MCF 10A (cell line): ENCODE measurements at regions of chr19 and their contacts with region 1.

Region 1: DNA sequence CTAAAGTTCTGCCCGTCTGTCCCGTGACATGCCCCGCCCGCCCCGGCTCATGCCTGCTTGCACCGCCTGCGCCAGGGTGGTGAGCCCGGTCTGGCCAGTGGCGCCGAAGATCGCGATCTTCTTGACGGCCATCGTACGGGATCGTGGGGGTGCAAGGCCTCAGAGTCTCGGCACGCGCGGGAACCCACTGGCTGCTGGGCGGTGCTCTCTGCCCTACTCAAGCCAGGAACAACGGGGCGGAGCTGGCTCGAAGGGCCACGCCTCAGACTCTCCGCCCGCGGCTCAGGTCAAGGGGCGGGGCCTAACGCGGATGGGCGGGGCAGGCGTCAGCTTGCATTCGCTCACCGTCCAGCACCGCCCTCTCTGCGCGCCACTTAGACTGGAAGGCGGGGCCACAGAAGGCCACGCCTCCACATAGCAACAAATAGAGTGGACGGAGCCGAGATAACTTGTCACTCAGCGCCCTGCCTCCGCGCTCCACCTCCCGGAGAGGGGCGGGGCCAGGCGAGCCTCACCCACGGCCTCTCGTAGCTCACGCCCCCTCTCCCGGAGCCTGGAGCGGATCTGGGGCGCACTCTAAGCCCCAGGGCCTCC is at the start of gene BLVRB:
- DNase-seq: peak; percentile 100
- H3K4me3 Mint-ChIP-seq: peak within 1 kb of the TSS; percentile 98
- H3K27ac Mint-ChIP-seq: peak within 1 kb of the TSS; percentile 92
- H3K4me1 Mint-ChIP-seq: peaks cover 19% of the 10 kb centered on the region
- H3K27me3 Mint-ChIP-seq: no peaks in the 10 kb centered on the region
- CTCF ChIP-seq: no peak
- total RNA-seq, gene BLVRB: 44.0 and 68.7 TPM in 2 replicates

Region 2: DNA sequence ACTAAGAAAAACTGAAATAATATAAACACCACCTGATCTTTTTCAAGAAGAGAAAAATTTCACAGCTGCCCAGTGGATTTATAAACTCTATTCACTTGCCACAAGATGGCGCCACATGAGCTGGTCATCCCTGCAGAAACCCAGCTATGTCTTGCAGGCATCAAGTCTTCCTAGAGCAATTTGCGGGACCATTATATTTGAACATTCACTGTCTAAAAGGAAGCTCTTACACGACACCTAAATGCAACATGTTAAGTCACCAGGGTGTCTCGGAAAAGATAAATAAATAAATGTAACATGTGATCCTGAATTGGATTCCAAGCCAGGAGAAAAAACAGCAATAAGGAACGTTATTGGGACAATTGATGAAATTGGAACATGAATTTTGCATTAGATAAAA is 160.3 kb before region 1 on chr19:
- CTCF ChIA-PET with region 1: interaction called, 17 read pairs
- POLR2A ChIA-PET with region 1: interaction called, 7 read pairs
- intact Hi-C with region 1: no loop called
- DNase-seq: peak; percentile 92
- H3K4me3 Mint-ChIP-seq: no peak overlapping the region
- H3K27ac Mint-ChIP-seq: no peak overlapping the region
- H3K4me1 Mint-ChIP-seq: peaks cover 8% of the 10 kb centered on the region
- H3K27me3 Mint-ChIP-seq: no peaks in the 10 kb centered on the region
- CTCF ChIP-seq: peak; percentile 72

Region 3: GRCh38 chr19:40425450-40426287 is 40.0 kb before region 1 on chr19 and contains the start of gene SERTAD1:
- CTCF ChIA-PET with region 1: interaction called, 18 read pairs
- POLR2A ChIA-PET with region 1: interaction called, 49 read pairs
- intact Hi-C with region 1: loop called (anchors 1 kb)
- DNase-seq: peak; percentile 99
- H3K4me3 Mint-ChIP-seq: peak within 1 kb of the TSS; percentile 95
- H3K27ac Mint-ChIP-seq: peak within 1 kb of the TSS; percentile 97
- H3K4me1 Mint-ChIP-seq: no peaks in the 10 kb centered on the region
- H3K27me3 Mint-ChIP-seq: no peaks in the 10 kb centered on the region
- CTCF ChIP-seq: peak; percentile 86
- total RNA-seq, gene SERTAD1: 16.2 and 17.9 TPM in 2 replicates

Region 4: GRCh38 chr19:40452016-40452415 is 13.6 kb before region 1 on chr19:
- CTCF ChIA-PET with region 1: interaction called, 14 read pairs
- POLR2A ChIA-PET with region 1: interaction called, 37 read pairs
- intact Hi-C with region 1: no loop called
- DNase-seq: no peak
- H3K4me3 Mint-ChIP-seq: no peak overlapping the region
- H3K27ac Mint-ChIP-seq: no peak overlapping the region
- H3K4me1 Mint-ChIP-seq: no peaks in the 10 kb centered on the region
- H3K27me3 Mint-ChIP-seq: no peaks in the 10 kb centered on the region
- CTCF ChIP-seq: no peak

Region 5: DNA sequence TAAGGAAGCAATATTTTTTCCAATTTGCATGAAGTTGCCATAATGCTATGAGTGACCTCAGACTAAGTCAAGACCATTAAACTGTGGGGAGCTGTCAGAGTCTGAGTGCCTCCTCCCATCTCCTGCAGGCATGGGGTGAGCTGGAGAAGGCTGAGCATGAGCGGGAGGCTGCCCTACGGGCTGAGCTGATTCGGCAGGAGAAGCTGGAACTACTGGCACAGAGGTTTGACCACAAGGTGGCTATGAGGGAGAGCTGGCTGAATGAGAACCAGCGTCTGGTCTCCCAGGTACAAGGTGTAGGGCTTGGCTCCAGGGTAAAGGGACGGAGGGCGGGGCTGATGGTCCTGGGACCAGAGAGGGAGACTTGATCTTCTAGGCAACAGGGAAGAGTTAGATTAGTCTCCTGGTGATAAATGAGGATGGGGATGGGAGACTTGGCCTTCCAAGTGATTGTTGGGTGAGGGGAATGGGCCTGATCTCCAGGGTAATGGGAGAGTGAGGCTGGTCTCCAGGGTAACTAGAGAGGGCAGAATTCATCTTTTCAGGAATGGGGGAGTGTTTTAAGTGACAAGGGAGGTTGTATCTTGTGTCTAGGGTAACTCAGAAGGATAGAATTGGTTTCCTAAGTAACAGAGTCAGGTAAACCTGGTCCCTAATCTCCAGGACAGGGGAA is 37.1 kb after region 1 on chr19:
- CTCF ChIA-PET with region 1: no interaction called
- POLR2A ChIA-PET with region 1: no interaction called
- intact Hi-C with region 1: no loop called
- DNase-seq: peak; percentile 45
- H3K4me3 Mint-ChIP-seq: no peak overlapping the region
- H3K27ac Mint-ChIP-seq: no peak overlapping the region
- H3K4me1 Mint-ChIP-seq: peaks cover 5% of the 10 kb centered on the region
- H3K27me3 Mint-ChIP-seq: peaks cover 28% of the 10 kb centered on the region
- CTCF ChIP-seq: peak; percentile 20

Region 6: DNA sequence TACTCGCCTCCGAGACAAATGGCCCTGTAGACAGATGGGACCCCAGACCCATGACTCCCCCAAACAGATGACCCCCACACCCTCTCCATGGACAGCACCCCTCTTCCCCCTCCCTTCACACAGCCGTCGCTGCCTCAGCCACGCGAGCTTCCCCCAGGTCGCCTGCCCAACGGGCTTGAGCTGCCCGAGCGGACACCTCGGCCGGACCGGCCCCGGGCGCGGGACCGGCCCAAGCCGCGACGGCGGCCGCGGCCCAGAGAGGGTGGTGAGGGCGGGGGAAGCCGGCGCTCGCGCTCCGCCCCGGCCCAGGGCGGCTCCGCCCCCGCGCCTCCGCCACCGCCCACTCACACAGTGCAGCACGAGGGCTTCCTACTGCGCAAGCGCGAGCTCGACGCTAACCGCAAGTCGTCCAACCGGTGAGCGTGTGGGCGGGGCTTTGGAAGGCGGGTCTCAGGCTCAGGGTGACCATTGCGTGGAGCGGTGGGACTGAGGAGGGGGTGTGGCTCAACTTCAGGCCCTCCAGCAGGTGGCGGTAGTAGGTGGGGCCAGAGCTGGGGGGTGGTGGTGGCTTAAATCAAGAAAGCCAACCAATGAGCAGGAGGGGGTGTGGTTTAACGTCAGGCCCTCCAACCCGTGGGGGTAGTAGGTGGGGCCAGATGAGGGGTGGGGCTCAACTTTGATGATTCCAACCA is 104.8 kb after region 1 on chr19:
- CTCF ChIA-PET with region 1: interaction called, 4 read pairs
- POLR2A ChIA-PET with region 1: interaction called, 23 read pairs
- intact Hi-C with region 1: no loop called
- DNase-seq: peak; percentile 100
- H3K4me3 Mint-ChIP-seq: peak overlapping the region; percentile 66
- H3K27ac Mint-ChIP-seq: peak overlapping the region; percentile 39
- H3K4me1 Mint-ChIP-seq: peaks cover 13% of the 10 kb centered on the region
- H3K27me3 Mint-ChIP-seq: no peaks in the 10 kb centered on the region
- CTCF ChIP-seq: peak; percentile 33

Region 7: GRCh38 chr19:40603389-40604135 is 137.9 kb after region 1 on chr19:
- CTCF ChIA-PET with region 1: interaction called, 40 read pairs
- POLR2A ChIA-PET with region 1: interaction called, 94 read pairs
- intact Hi-C with region 1: loop called (anchors 1 kb)
- DNase-seq: peak; percentile 99
- H3K4me3 Mint-ChIP-seq: peak overlapping the region; percentile 79
- H3K27ac Mint-ChIP-seq: peak overlapping the region; percentile 69
- H3K4me1 Mint-ChIP-seq: peaks cover 47% of the 10 kb centered on the region
- H3K27me3 Mint-ChIP-seq: no peaks in the 10 kb centered on the region
- CTCF ChIP-seq: no peak

Region 8: DNA sequence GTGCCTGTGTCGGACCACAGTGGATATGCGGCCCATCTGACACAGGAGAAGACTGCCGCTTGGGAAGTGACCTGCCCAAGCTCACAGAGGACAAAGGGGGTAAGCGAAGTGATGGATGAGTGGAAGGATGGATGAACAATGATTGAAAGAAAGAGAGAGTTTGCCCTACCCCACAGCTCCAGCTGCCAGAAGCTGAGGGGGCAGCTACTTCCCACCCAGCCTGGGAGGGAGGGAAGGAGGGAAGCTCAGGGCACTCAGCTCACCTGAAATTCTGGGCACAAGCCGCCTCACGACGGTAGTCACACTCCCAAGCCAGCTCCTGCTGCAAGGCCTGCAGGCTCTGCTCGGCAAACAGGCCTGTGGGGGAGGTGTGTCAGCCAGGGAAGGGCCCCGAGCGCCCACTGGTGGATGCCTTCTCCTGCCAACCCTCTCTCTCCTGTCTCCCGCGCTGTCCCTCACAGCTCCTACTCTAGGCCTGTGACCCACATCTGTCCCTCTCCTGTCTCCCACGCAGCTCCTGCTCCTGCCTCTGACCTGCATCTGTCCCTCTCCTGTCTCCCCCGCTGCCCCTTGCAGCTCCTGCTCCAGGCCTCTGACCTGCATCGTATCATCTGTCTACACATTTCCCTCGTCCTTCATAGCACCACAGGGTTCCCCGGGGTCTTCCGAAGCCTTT is 236.8 kb after region 1 on chr19:
- CTCF ChIA-PET with region 1: no interaction called
- POLR2A ChIA-PET with region 1: no interaction called
- intact Hi-C with region 1: no loop called
- DNase-seq: no peak
- H3K4me3 Mint-ChIP-seq: no peak overlapping the region
- H3K27ac Mint-ChIP-seq: no peak overlapping the region
- H3K4me1 Mint-ChIP-seq: peaks cover 3% of the 10 kb centered on the region
- H3K27me3 Mint-ChIP-seq: no peaks in the 10 kb centered on the region
- CTCF ChIP-seq: no peak